CD4-positive, alpha-beta T cell (primary cell): ENCODE measurements at regions of chr2 and their contacts with region 1.

Region 1: GRCh38 chr2:161077367-161078210 is 82.6 kb upstream of the TANK start:
- DNase-seq: peak; percentile 11 to 88 (median 35)
- ATAC-seq: peak; percentile 92
- H3K4me3 ChIP-seq: no peak overlapping the region
- H3K4me3 Mint-ChIP-seq: peak overlapping the region; percentile 14
- H3K27ac ChIP-seq: peak overlapping the region; percentile 22 to 42
- H3K27ac Mint-ChIP-seq: peak overlapping the region; percentile 78
- H3K4me1 ChIP-seq: peaks cover 17% of the 10 kb centered on the region
- H3K4me1 Mint-ChIP-seq: peaks cover 28% of the 10 kb centered on the region
- H3K27me3 ChIP-seq: no peaks in the 10 kb centered on the region
- H3K27me3 Mint-ChIP-seq: no peaks in the 10 kb centered on the region
- CTCF ChIP-seq: no peak

Region 2: GRCh38 chr2:160482673-160483072 is 594.9 kb before region 1 on chr2:
- CTCF ChIA-PET with region 1: no interaction called
- POLR2A ChIA-PET with region 1: no interaction called
- intact Hi-C with region 1: no loop called
- DNase-seq: peak in 9 of 14 experiments; percentile 4 to 87 (median 35)
- ATAC-seq: peak; percentile 94
- H3K4me3 ChIP-seq: no peak overlapping the region
- H3K4me3 Mint-ChIP-seq: peak overlapping the region; percentile 68
- H3K27ac ChIP-seq: peak overlapping the region; percentile 39 to 55
- H3K27ac Mint-ChIP-seq: peak overlapping the region; percentile 85
- H3K4me1 ChIP-seq: peaks cover 41% of the 10 kb centered on the region
- H3K4me1 Mint-ChIP-seq: peaks cover 90% of the 10 kb centered on the region
- H3K27me3 ChIP-seq: no peaks in the 10 kb centered on the region
- H3K27me3 Mint-ChIP-seq: no peaks in the 10 kb centered on the region
- CTCF ChIP-seq: no peak

Region 3: DNA sequence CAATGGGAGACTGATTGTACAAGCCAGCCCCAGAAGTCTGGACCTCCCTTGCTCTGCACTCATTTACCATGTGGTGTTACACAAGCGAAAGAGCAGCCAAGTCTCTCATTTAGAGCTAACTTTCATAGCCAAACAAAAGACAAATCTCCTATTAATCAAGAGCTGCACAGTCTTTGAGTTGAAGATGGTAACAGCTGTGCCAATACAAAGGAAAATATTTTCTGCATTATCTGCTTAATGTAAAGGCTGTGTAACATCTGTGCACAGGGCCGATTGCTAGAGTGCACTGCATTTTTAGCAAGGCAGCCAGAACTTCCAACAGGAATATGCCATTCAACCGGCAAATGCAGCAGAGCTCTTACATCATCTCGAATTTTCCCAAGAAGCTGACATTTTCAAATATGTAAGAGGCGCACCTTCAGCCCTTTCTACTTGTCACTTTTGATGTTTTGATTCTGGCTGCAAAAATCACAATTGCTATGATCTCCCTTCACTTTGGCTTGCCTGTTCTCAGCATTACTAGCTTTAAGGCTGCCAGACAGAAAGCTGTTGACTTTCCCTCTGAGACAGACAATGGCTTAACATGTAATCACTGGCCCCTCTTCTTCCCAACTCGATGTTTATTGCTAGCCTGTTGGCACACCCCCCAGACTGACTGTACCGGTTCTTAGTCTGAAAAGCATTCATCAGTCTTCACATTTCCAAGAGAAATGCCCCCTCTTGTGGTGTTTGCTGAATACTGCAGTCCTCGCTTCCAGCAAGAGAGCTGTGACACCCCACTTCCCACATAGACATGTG is 14.2 kb before region 1 on chr2:
- CTCF ChIA-PET with region 1: interaction called, 11 read pairs
- POLR2A ChIA-PET with region 1: interaction called, 12 read pairs
- intact Hi-C with region 1: no loop called
- DNase-seq: peak; percentile 36 to 81 (median 54)
- ATAC-seq: peak; percentile 94
- H3K4me3 ChIP-seq: no peak overlapping the region
- H3K4me3 Mint-ChIP-seq: no peak overlapping the region
- H3K27ac ChIP-seq: no peak overlapping the region
- H3K27ac Mint-ChIP-seq: no peak overlapping the region
- H3K4me1 ChIP-seq: peaks cover 4% of the 10 kb centered on the region
- H3K4me1 Mint-ChIP-seq: peaks cover 5% of the 10 kb centered on the region
- H3K27me3 ChIP-seq: no peaks in the 10 kb centered on the region
- H3K27me3 Mint-ChIP-seq: no peaks in the 10 kb centered on the region
- CTCF ChIP-seq: peak; percentile 92

Region 4: GRCh38 chr2:161090411-161090810 is 12.8 kb after region 1 on chr2:
- CTCF ChIA-PET with region 1: no interaction called
- POLR2A ChIA-PET with region 1: interaction called, 3 read pairs
- intact Hi-C with region 1: loop called in 1 of 2 experiments (anchors 1 kb)
- DNase-seq: peak in 12 of 14 experiments; percentile 5 to 59 (median 28)
- ATAC-seq: peak; percentile 71
- H3K4me3 ChIP-seq: peak overlapping the region; percentile 3
- H3K4me3 Mint-ChIP-seq: peak overlapping the region; percentile 60
- H3K27ac ChIP-seq: no peak overlapping the region
- H3K27ac Mint-ChIP-seq: no peak overlapping the region
- H3K4me1 ChIP-seq: no peaks in the 10 kb centered on the region
- H3K4me1 Mint-ChIP-seq: peaks cover 22% of the 10 kb centered on the region
- H3K27me3 ChIP-seq: no peaks in the 10 kb centered on the region
- H3K27me3 Mint-ChIP-seq: no peaks in the 10 kb centered on the region
- CTCF ChIP-seq: no peak

Region 5: DNA sequence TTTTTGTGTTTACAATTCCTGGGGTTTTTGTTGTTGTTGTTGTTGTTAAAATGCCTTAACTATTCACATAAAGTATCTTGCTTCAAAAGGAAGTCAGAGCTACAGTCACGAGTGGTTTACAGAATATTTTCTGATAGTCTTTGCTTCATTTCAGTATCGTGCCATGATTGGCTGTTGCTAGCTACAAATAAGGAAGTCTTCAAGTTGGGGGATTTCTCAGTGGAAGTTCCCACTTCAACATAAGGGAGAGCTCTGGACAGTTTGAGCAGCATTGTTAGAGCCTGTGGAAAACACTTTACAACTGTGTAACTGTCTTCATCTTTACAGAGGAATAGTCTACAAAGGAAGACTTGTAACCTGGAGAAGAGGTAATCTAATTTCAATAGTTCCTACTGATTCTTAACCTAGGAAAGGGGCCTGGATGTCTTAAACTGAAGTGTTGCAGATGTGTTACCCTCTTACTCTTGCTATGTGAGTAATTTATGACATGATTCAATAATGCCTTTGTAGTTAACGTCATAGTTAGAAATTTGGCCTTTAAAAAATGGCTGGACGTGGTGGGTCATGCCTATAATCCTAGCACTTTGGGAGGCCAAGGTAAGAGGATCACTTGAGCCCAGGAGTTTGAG is 59.2 kb after region 1 on chr2:
- CTCF ChIA-PET with region 1: no interaction called
- POLR2A ChIA-PET with region 1: interaction called, 3 read pairs
- intact Hi-C with region 1: loop called in 1 of 2 experiments (anchors 2 kb)
- DNase-seq: peak in 6 of 14 experiments; percentile 11 to 93 (median 52)
- ATAC-seq: peak; percentile 88
- H3K4me3 ChIP-seq: peak overlapping the region; percentile 62
- H3K4me3 Mint-ChIP-seq: peak overlapping the region; percentile 87
- H3K27ac ChIP-seq: peak overlapping the region; percentile 76 to 91
- H3K27ac Mint-ChIP-seq: peak overlapping the region; percentile 89
- H3K4me1 ChIP-seq: peaks cover 16% of the 10 kb centered on the region
- H3K4me1 Mint-ChIP-seq: peaks cover 60% of the 10 kb centered on the region
- H3K27me3 ChIP-seq: no peaks in the 10 kb centered on the region
- H3K27me3 Mint-ChIP-seq: no peaks in the 10 kb centered on the region
- CTCF ChIP-seq: no peak